ENCODE measurements at regions of chr1 and their contacts with region 1.

Region 1: DNA sequence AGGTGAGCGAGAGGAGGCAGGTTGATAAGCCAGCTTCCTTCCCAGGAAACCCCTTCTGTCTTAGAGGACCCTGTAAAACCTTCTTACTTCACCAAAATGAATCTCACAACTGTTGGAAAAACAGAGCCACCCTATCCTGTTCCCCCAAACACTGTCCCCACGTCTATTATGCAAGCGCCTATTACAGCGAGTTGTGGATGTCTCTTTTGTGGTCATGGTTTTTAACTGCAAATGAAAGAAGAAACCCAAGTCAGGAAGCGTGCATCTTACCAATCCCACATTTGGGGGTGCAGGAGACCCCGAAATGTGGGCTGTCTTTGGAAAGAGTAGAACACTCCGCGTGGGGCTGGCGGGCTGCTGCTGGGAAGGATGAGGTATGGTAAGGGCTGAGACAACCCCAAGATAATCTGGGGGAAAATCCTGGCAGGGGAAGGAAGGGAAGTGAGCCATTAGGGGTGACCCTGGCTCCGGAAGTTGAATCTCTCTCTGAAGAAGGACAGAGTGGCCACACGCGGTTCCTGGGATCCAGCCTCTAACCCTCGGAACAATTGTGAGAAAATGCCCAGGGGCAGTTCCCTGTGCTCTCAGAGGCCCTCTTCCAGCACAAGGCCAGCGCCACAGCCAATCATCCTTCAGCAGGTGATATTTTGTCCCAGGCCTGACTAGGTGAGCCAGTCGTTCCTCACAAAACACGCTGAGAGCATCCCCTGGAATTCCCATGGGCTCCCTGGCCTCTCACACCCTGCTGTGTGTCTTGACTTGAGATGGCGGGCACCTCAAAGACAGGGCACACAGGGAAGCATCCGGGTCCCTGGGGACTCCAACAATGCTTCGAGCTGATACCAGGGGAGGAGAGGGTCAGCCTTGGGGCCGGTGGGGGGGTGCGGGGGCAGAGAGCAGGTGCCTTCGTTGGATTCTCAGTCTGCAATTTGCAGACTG is 168.5 kb upstream of the IRF2BP2 start:
- DNase-seq: peak in 1 of 2 experiments; percentile 52
- H3K4me3 ChIP-seq: no peak overlapping the region
- H3K4me3 Mint-ChIP-seq: no peak overlapping the region
- H3K27ac Mint-ChIP-seq: no peak overlapping the region
- H3K4me1 ChIP-seq: peaks cover 15% of the 10 kb centered on the region
- H3K4me1 Mint-ChIP-seq: no peaks in the 10 kb centered on the region
- H3K27me3 ChIP-seq: no peaks in the 10 kb centered on the region
- H3K27me3 Mint-ChIP-seq: no peaks in the 10 kb centered on the region
- CTCF ChIP-seq: no peak

Region 2: GRCh38 chr1:234734869-234735268 is 43.6 kb before region 1 on chr1:
- CTCF ChIA-PET with region 1: no interaction called
- POLR2A ChIA-PET with region 1: interaction called, 17 read pairs
- intact Hi-C with region 1: no loop called
- DNase-seq: peak; percentile 44 to 54
- H3K4me3 ChIP-seq: no peak overlapping the region
- H3K4me3 Mint-ChIP-seq: no peak overlapping the region
- H3K27ac Mint-ChIP-seq: peak overlapping the region; percentile 87
- H3K4me1 ChIP-seq: peaks cover 16% of the 10 kb centered on the region
- H3K4me1 Mint-ChIP-seq: peaks cover 48% of the 10 kb centered on the region
- H3K27me3 ChIP-seq: no peaks in the 10 kb centered on the region
- H3K27me3 Mint-ChIP-seq: no peaks in the 10 kb centered on the region
- CTCF ChIP-seq: peak in 1 of 2 experiments; percentile 43

Measured in Caco-2 (cell line).